Psoas muscle (tissue), 8 donors: ENCODE measurements at regions of chr1 and their contacts with region 1.

Region 1: GRCh38 chr1:85259118-85259911 is at the start of gene C1orf52:
- DNase-seq: peak; percentile 96 to 98
- ATAC-seq: peak; percentile 98 to 100 (median 99)
- H3K4me3 ChIP-seq: peak within 1 kb of the TSS; percentile 95
- H3K27ac ChIP-seq: peak within 1 kb of the TSS; percentile 93
- H3K4me1 ChIP-seq: peaks cover 23% of the 10 kb centered on the region
- H3K27me3 ChIP-seq: no peaks in the 10 kb centered on the region
- CTCF ChIP-seq: peak; percentile 99
- total RNA-seq, gene C1orf52: 10.2 to 20.7 (median 13.1) TPM

Region 2: DNA sequence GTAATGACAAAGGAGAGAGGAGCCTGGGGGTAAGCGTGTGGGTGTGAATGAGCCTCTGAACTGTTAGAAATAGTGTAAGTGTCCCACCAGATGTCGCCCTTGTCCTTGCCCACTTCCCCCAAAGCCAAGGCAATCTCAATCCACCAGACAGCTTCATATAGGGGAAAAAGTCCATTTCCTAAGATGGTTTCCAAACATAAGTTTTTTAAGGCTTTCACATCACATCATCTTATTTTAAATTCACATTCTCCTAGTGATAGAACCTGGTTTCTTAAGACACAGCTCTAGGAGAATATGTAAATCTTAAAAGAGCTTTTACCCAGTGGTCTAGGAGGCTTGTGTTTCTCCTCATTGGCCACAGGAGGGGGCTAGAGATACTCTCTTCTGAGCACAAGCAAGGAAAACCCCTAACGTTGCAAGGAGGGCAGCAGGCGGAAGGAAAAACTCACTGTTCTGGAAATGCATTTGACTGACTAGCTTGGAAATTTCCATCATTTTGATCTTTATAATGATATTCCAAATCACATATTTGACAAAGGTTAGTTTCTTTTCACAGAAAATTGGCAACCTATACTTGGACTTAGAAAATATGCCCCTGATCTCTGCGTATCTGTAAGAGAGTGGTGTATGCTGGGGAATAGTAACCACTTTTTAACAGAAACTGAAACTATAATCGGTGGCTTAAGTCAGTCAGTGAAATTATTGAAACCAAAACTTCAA is 314.4 kb before region 1 on chr1:
- intact Hi-C with region 1: loop called (anchors 1 to 2 kb)
- DNase-seq: peak in 1 of 2 donors; percentile 41
- ATAC-seq: peak; percentile 92 to 99 (median 96)
- H3K4me3 ChIP-seq: peak overlapping the region; percentile 64
- H3K27ac ChIP-seq: peak overlapping the region; percentile 63
- H3K4me1 ChIP-seq: no peaks in the 10 kb centered on the region
- H3K27me3 ChIP-seq: peaks cover 0 to 10% (median 0%) of the 10 kb centered on the region in 3 donors
- CTCF ChIP-seq: peak; percentile 89

Region 3: GRCh38 chr1:85061711-85062424 is 197.4 kb before region 1 on chr1:
- intact Hi-C with region 1: loop called in 1 of 2 experiments (anchors 10 kb)
- DNase-seq: peak; percentile 78 to 85
- ATAC-seq: peak; percentile 100
- H3K4me3 ChIP-seq: peak overlapping the region; percentile 75
- H3K27ac ChIP-seq: no peak overlapping the region
- H3K4me1 ChIP-seq: no peaks in the 10 kb centered on the region
- H3K27me3 ChIP-seq: no peaks in the 10 kb centered on the region
- CTCF ChIP-seq: no peak

Region 4: GRCh38 chr1:85111695-85112094 is 147.6 kb before region 1 on chr1:
- intact Hi-C with region 1: loop called (anchors 5 to 10 kb)
- DNase-seq: no peak
- ATAC-seq: no peak
- H3K4me3 ChIP-seq: no peak overlapping the region
- H3K27ac ChIP-seq: no peak overlapping the region
- H3K4me1 ChIP-seq: no peaks in the 10 kb centered on the region
- H3K27me3 ChIP-seq: peaks cover 0 to 4% (median 0%) of the 10 kb centered on the region in 3 donors
- CTCF ChIP-seq: no peak

Region 5: GRCh38 chr1:85116856-85117255 is 142.5 kb before region 1 on chr1:
- intact Hi-C with region 1: loop called (anchors 5 to 10 kb)
- DNase-seq: no peak
- ATAC-seq: no peak
- H3K4me3 ChIP-seq: no peak overlapping the region
- H3K27ac ChIP-seq: no peak overlapping the region
- H3K4me1 ChIP-seq: no peaks in the 10 kb centered on the region
- H3K27me3 ChIP-seq: peaks cover 0 to 3% (median 0%) of the 10 kb centered on the region in 3 donors
- CTCF ChIP-seq: no peak

Region 6: GRCh38 chr1:85200870-85201339 is 58.4 kb before region 1 on chr1 and contains the start of gene SYDE2:
- intact Hi-C with region 1: loop called in 1 of 2 experiments (anchors 5 kb)
- DNase-seq: peak; percentile 78 to 86
- ATAC-seq: peak; percentile 88 to 93 (median 90)
- H3K4me3 ChIP-seq: peak within 1 kb of the TSS; percentile 96
- H3K27ac ChIP-seq: peak within 1 kb of the TSS; percentile 93
- H3K4me1 ChIP-seq: peaks cover 9% of the 10 kb centered on the region
- H3K27me3 ChIP-seq: no peaks in the 10 kb centered on the region
- CTCF ChIP-seq: no peak
- total RNA-seq, gene SYDE2: 3.9 to 5.9 (median 4.9) TPM

Region 7: GRCh38 chr1:85289207-85289847 is 30.0 kb after region 1 on chr1:
- intact Hi-C with region 1: no loop called
- DNase-seq: no peak
- ATAC-seq: no peak
- H3K4me3 ChIP-seq: no peak overlapping the region
- H3K27ac ChIP-seq: no peak overlapping the region
- H3K4me1 ChIP-seq: no peaks in the 10 kb centered on the region
- H3K27me3 ChIP-seq: no peaks in the 10 kb centered on the region
- CTCF ChIP-seq: no peak